Activated CD4-positive, alpha-beta memory T cell treated with anti-CD3 and anti-CD28 coated beads for 36 hours (primary cell): ENCODE measurements at regions of chr14 and their contacts with region 1.

Region 1: GRCh38 chr14:101707068-101707842 is 54.3 kb upstream of the PPP2R5C start:
- DNase-seq: peak; percentile 65
- H3K4me3 Mint-ChIP-seq: peak overlapping the region; percentile 51
- H3K27ac Mint-ChIP-seq: peak overlapping the region; percentile 84
- H3K4me1 Mint-ChIP-seq: peaks cover 30% of the 10 kb centered on the region
- H3K27me3 Mint-ChIP-seq: no peaks in the 10 kb centered on the region

Region 2: DNA sequence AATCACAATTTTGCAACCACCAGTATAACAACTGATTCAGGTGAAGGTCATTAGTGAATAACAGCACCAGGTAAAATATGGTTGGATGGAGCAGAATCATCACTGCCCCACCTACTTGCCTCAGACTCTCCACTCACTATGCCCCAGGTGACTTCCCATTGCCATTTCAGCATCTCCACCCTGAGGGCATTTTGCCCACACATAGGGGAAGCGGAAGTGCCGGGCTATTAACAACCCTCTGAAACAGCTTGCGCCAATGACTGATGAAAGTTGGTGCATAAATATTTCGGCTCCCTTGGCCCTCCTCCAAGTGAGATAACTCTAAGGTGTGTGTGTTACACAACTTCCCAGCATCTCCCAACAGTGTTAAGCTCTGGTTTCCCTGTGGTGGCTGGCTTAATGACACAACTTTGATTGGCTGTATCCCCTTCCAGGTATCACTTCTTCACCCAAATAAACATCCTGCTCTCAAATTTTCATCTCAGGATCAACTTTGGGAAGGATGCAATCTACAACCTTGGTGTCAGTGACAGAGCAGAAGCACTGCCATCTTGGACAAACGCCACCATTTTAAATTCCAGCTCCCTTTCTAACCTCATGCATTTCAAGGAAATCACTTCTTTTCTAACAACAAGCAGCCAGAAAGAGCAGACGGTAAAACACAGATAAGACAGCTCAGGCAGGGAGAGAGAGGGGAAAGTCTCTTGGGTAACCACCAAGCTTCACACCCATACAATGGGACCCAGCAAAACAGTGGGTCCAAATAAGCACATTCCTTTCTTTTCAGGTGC is 19.3 kb before region 1 on chr14:
- CTCF ChIA-PET with region 1: no interaction called
- POLR2A ChIA-PET with region 1: no interaction called
- intact Hi-C with region 1: no loop called
- DNase-seq: no peak
- H3K4me3 Mint-ChIP-seq: no peak overlapping the region
- H3K27ac Mint-ChIP-seq: no peak overlapping the region
- H3K4me1 Mint-ChIP-seq: no peaks in the 10 kb centered on the region
- H3K27me3 Mint-ChIP-seq: peaks cover 11% of the 10 kb centered on the region

Region 3: GRCh38 chr14:101721951-101722661 is 14.9 kb after region 1 on chr14:
- CTCF ChIA-PET with region 1: interaction called, 41 read pairs
- POLR2A ChIA-PET with region 1: interaction called, 4 read pairs
- intact Hi-C with region 1: loop called (anchors 1 kb)
- DNase-seq: peak; percentile 86
- H3K4me3 Mint-ChIP-seq: peak overlapping the region; percentile 77
- H3K27ac Mint-ChIP-seq: peak overlapping the region; percentile 99
- H3K4me1 Mint-ChIP-seq: peaks cover 45% of the 10 kb centered on the region
- H3K27me3 Mint-ChIP-seq: no peaks in the 10 kb centered on the region

Region 4: DNA sequence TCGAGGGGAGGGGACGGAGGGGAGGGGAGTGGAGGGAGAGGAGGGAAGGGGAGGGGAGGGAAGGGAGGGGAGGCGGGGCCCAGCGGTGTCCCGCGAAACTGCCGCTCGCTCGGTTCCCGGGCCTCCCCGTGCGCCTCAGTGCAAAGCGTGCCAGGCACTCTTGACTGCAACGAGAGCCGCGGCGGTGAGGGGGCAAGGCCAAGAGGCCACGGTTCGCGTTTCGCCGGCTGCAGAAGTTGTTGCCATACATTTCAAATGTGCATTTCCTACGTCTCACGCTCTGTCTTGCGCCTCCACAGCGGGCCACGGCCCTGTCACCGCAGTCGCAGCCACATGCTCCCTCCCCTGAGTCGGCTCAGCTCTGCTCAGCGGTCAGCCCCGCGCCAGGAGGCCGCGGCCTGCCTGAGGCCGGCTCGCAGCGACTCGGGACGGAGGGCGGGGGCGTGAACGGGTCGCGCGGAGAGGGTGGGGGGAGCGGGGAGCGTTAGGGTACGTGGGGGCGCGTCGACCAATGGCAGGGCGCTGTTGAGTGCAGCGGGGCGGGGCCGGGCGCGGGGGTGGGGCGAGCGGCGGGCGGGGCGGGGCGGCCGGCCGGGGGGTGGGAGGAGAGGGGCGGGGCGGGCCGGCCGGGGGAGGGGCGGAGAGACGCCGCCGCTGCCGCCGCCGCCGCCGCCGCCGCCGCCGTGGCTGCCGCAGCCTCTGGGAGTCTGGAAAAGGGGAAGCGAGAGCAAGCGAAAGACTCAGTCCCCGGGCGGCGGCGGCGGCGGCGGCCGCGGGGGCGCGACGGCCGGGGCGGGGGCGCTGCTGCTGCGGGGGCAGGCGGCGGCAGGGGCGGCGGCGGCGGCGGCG is 54.0 kb after region 1 on chr14 and contains the start of gene PPP2R5C:
- CTCF ChIA-PET with region 1: interaction called, 36 read pairs
- POLR2A ChIA-PET with region 1: interaction called, 7 read pairs
- intact Hi-C with region 1: loop called (anchors 1 kb)
- DNase-seq: peak; percentile 91
- H3K4me3 Mint-ChIP-seq: peak within 1 kb of the TSS; percentile 87
- H3K27ac Mint-ChIP-seq: peak within 1 kb of the TSS; percentile 75
- H3K4me1 Mint-ChIP-seq: peaks cover 46% of the 10 kb centered on the region
- H3K27me3 Mint-ChIP-seq: no peaks in the 10 kb centered on the region
- total RNA-seq, gene PPP2R5C: 252 to 268 TPM

Region 5: GRCh38 chr14:101843665-101844064 is 136.4 kb after region 1 on chr14:
- CTCF ChIA-PET with region 1: interaction called, 13 read pairs
- POLR2A ChIA-PET with region 1: interaction called, 5 read pairs
- intact Hi-C with region 1: loop called (anchors 1 kb)
- DNase-seq: peak; percentile 83
- H3K4me3 Mint-ChIP-seq: no peak overlapping the region
- H3K27ac Mint-ChIP-seq: peak overlapping the region; percentile 85
- H3K4me1 Mint-ChIP-seq: peaks cover 87% of the 10 kb centered on the region
- H3K27me3 Mint-ChIP-seq: no peaks in the 10 kb centered on the region

Region 6: DNA sequence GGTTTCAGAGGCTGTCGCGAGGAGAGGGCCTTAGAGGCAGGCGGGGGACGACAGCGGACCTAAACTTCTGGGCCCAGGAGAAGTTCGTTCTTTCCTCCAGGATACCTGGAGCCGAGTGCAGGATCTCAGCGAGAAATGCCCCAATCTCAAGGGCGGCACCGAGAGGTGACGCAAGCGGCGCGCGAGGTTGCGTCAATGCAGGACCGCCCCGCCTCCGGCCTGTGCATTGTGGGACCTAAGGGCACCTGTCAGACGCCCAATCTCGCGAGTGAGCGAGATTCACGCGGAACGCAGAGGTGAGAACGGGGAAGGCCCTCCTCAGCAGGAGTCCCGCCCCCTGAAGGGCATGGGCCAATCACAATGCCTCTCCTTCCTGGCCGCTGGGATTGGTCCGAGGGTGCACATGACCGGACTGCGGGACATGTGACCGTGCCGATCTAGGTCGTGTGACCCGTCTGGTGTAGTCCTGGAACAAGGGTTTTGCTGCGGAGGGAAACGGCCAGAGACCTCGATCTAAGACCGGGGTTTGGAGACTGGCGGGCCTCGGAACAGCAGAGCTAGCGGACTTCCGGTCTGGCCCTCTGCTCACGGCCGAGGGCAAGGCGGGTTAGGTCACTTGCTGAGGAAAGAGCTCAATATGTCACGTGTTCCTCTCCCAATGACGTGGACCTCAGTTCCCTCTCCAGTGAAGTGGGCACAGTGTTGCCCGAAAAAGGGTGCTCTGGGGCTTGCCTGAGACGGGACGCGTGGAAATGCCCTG is 240.8 kb after region 1 on chr14:
- CTCF ChIA-PET with region 1: interaction called, 5 read pairs
- POLR2A ChIA-PET with region 1: interaction called, 4 read pairs
- intact Hi-C with region 1: loop called (anchors 2 kb)
- DNase-seq: peak; percentile 100
- H3K4me3 Mint-ChIP-seq: peak overlapping the region; percentile 92
- H3K27ac Mint-ChIP-seq: peak overlapping the region; percentile 95
- H3K4me1 Mint-ChIP-seq: peaks cover 15% of the 10 kb centered on the region
- H3K27me3 Mint-ChIP-seq: peaks cover 20% of the 10 kb centered on the region

Region 7: GRCh38 chr14:101964297-101965144 is 257.3 kb after region 1 on chr14 and contains the start of gene DYNC1H1:
- CTCF ChIA-PET with region 1: interaction called, 20 read pairs
- POLR2A ChIA-PET with region 1: no interaction called
- intact Hi-C with region 1: loop called (anchors 1 kb)
- DNase-seq: peak; percentile 91
- H3K4me3 Mint-ChIP-seq: peak within 1 kb of the TSS; percentile 88
- H3K27ac Mint-ChIP-seq: peak within 1 kb of the TSS; percentile 84
- H3K4me1 Mint-ChIP-seq: peaks cover 35% of the 10 kb centered on the region
- H3K27me3 Mint-ChIP-seq: no peaks in the 10 kb centered on the region
- total RNA-seq, gene DYNC1H1: 242 to 245 TPM

Region 8: DNA sequence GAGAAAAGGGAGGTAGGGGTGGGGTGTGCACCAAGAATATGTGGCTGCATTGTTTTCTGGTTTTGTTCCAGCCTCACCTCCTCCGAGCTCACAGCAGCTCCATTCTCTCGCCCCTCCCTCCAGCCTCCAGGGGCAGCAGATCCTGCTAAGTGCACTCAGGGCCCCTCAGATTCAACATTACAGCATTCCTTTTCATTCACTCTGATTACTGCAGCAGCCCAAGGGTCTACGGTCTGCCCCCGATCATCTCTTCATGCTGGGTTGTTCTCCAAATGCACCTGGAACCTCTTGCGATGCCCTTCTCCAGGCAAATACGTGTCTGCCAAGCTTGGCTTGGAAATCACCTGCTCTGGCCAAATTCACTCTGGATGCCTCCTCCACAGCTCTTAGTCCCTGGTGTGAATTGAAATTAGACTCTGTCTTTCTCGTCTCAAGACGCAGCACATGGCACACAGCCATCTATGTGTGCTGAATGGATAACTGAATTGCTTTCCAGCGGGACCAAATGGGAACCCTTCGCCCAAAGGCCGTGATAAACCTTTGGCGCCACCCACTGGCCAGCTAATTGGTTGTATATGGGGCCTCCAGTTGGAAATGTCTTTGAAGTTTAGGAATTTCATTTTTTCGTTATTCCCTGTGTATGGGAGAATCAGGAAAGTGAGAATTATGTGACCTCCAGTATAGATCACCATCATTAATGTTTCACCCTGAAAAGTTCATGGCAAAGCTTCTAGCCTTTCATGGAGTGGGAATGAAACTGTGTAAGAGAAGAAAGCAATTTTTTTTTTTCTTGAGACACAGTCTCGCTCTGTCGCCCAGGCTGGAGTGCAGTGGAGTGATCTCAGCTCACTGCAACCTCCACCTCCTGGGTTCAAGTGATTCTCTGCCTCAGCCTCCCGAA is 389.2 kb after region 1 on chr14:
- CTCF ChIA-PET with region 1: interaction called, 13 read pairs
- POLR2A ChIA-PET with region 1: no interaction called
- intact Hi-C with region 1: no loop called
- DNase-seq: peak; percentile 80
- H3K4me3 Mint-ChIP-seq: no peak overlapping the region
- H3K27ac Mint-ChIP-seq: no peak overlapping the region
- H3K4me1 Mint-ChIP-seq: peaks cover 22% of the 10 kb centered on the region
- H3K27me3 Mint-ChIP-seq: no peaks in the 10 kb centered on the region